ENCODE measurements at regions of chr1 and their contacts with region 1.

Region 1: GRCh38 chr1:25520446-25521061 is 22.9 kb upstream of the LDLRAP1 start:
- DNase-seq: peak; percentile 70
- H3K4me3 ChIP-seq: no peak overlapping the region
- H3K27ac ChIP-seq: no peak overlapping the region
- H3K4me1 ChIP-seq: peaks cover 0 to 7% of the 10 kb centered on the region in 2 experiments; a peak in 1 of 4 replicates
- H3K27me3 ChIP-seq: no peaks in the 10 kb centered on the region; the same call in 1 of the 2 replicates
- CTCF ChIP-seq: peak; percentile 91
- EP300 ChIP-seq: no peak
- RAD21 ChIP-seq: peak; percentile 77

Region 2: GRCh38 chr1:25427696-25428095 is 92.9 kb before region 1 on chr1:
- CTCF ChIA-PET with region 1: interaction called, 10 read pairs
- POLR2A ChIA-PET with region 1: no interaction called
- DNase-seq: no peak
- H3K4me3 ChIP-seq: no peak overlapping the region
- H3K27ac ChIP-seq: no peak overlapping the region
- H3K4me1 ChIP-seq: peaks cover 0 to 9% of the 10 kb centered on the region in 2 experiments; a peak in 3 of 4 replicates
- H3K27me3 ChIP-seq: no peaks in the 10 kb centered on the region
- CTCF ChIP-seq: no peak
- EP300 ChIP-seq: no peak
- RAD21 ChIP-seq: no peak

Region 3: DNA sequence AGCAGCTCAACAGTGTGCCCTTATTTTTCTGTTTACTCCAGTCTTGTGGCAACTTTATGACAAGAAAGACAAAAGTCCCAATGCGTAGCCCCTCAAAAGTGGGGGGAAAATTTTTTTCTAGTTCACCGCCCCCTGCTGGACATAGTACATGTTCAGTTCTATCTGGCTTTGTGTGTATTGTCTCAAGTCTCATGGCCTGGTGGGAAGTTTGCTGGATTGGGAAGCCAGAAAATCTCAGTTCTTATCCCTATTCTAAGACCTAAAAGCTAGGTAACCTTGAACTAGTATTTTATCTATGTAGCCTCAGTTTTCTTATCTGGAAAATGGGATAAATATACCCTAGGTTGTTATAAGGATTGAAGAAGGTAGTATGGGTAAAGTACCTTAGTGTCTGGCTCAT is 32.9 kb before region 1 on chr1:
- CTCF ChIA-PET with region 1: interaction called, 27 read pairs
- POLR2A ChIA-PET with region 1: no interaction called
- DNase-seq: peak; percentile 37
- H3K4me3 ChIP-seq: no peak overlapping the region; a peak in 1 of 4 replicates
- H3K27ac ChIP-seq: no peak overlapping the region
- H3K4me1 ChIP-seq: no peaks in the 10 kb centered on the region; a peak in 2 of 4 replicates
- H3K27me3 ChIP-seq: no peaks in the 10 kb centered on the region
- CTCF ChIP-seq: peak; percentile 69
- EP300 ChIP-seq: no peak
- RAD21 ChIP-seq: peak; percentile 15; the same call in 1 of the 2 replicates

Region 4: DNA sequence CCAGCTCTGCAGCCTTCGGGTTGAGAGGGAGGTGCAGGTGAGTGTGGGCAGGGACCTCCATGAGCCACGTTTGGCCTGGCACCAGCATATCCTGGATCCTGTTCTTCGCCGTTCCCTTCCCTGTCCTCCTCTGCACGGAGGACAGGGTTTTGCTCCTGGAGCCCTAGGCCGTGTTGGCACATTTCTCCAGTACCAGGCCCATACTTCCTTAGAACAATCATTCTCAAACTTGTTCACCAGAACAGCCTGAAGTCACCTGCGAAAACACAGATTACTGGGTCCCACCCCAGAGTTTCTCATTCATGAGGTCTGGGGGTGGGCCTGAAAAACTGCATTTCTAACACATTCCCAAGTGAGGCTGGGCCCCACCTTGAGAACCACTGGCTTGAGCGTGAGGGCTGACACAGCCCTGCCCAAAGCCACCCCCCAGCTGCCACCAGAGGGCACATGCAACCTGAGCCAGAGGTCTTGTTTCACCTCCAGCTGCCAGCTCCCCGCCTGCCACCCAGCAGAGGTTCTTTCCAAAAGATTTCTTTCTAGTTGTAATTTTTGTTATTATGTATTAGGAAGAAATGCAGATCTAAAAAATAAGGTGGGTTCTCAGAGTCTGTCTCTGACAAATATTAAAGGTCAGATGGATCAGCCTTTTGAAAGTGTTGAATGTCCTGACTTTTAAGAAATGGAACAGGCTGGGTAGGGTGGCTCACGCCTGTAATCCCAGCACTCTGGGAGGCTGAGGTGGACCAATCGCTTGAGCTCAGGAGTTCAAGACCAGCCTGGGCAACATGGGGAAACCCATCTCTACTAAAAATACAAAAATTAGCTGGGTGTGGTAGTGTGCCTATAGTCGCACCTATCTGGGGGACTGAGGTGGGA is 16.8 kb before region 1 on chr1:
- CTCF ChIA-PET with region 1: interaction called, 46 read pairs
- POLR2A ChIA-PET with region 1: interaction called, 3 read pairs
- DNase-seq: peak; percentile 63
- H3K4me3 ChIP-seq: no peak overlapping the region
- H3K27ac ChIP-seq: peak overlapping the region; percentile 40 to 55
- H3K4me1 ChIP-seq: peaks cover 15 to 22% of the 10 kb centered on the region in 2 experiments; a peak in 3 of 4 replicates
- H3K27me3 ChIP-seq: no peaks in the 10 kb centered on the region
- CTCF ChIP-seq: peak; percentile 48
- EP300 ChIP-seq: no peak
- RAD21 ChIP-seq: peak; percentile 54

Region 5: GRCh38 chr1:25562101-25562927 is 41.8 kb after region 1 on chr1:
- CTCF ChIA-PET with region 1: no interaction called
- POLR2A ChIA-PET with region 1: no interaction called
- DNase-seq: no peak
- H3K4me3 ChIP-seq: no peak overlapping the region
- H3K27ac ChIP-seq: no peak overlapping the region
- H3K4me1 ChIP-seq: peaks cover 0 to 15% of the 10 kb centered on the region in 2 experiments; a peak in 1 of 4 replicates
- H3K27me3 ChIP-seq: no peaks in the 10 kb centered on the region
- CTCF ChIP-seq: no peak
- EP300 ChIP-seq: no peak
- RAD21 ChIP-seq: no peak

Region 6: DNA sequence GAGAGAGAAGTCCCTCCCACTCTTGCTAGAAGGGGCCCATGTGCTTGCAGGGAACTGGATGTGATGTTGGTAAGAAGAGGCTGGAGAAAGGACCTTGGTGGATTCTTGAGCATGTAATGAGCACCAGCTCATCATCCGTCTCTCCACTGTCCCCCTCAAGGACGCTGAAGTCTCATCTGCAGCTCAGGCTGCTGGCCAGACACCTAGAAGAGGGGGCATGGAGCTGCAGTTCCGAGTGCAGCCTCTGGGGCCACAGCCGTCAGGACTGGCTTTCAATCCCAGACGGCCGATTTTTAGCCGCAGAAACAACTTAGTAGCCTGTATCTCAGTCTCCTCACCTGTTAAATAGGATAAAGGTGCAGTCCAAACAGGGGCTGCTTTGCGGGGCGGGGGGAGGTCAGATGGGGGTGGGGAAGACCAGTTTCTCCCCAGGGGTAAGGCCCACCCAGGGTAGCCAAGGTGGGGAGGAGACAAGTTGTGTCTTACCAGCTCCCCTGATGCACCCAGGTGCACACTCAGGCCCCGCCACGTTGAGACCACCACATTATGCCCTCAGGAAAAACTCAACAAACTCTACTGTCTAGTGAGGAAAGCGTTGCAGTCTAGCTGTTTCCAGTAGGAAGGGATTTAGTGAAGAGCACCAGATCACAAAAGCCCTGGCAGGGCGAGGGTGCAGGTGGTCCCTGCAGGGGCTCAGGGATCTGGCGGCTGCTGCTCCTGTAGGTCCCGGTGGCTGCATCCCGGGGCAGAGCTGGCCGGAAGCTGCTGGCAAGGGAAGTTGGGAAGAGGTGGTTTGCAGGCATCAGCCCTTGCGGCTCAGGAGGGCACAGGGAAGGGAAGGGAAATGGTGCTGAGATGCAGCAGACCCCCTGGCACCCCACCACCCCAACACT is 52.4 kb after region 1 on chr1:
- CTCF ChIA-PET with region 1: interaction called, 12 read pairs
- POLR2A ChIA-PET with region 1: no interaction called
- DNase-seq: peak; percentile 85
- H3K4me3 ChIP-seq: no peak overlapping the region
- H3K27ac ChIP-seq: no peak overlapping the region
- H3K4me1 ChIP-seq: peaks cover 9 to 11% of the 10 kb centered on the region in 2 experiments; a peak in 3 of 4 replicates
- H3K27me3 ChIP-seq: no peaks in the 10 kb centered on the region
- CTCF ChIP-seq: peak; percentile 61
- EP300 ChIP-seq: no peak
- RAD21 ChIP-seq: peak; percentile 38

Region 7: DNA sequence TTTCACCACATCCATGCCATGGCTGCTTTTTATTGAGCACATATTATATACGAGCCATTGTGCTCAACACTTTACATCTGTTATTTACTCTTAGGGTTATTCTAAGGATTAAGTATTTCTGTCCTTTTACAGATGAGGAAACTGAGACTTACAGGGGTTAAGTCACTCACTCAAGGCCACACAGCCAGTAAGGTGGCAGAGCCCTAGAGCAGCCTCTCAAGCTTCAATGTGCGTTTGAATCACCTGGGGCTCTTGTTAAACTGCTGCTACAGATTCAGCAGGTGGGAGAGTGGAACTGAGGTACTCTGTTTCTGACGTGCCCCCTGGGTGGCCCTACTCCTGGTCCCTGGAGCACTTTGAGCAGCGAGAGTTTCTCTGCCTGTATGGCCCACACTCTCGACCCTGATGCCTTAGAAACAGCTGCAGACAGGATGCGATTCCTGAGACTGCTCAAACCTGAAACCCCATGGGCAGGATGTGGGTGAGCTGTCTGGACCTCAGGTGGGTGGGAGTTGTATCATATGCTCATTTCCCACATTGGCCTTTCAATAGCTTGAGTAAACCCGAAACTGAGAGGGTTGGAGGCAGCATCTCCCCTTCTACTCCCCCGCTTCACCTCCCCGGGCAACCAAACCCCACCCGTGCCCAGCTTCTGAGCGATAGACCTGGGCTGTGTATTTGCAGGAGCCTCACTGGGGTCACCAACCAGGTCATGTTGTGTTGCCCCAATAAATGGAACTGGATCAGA is 155.3 kb after region 1 on chr1:
- CTCF ChIA-PET with region 1: no interaction called
- POLR2A ChIA-PET with region 1: no interaction called
- DNase-seq: no peak
- H3K4me3 ChIP-seq: no peak overlapping the region
- H3K27ac ChIP-seq: no peak overlapping the region
- H3K4me1 ChIP-seq: no peaks in the 10 kb centered on the region
- H3K27me3 ChIP-seq: peaks cover 21% of the 10 kb centered on the region; the same call in 1 of the 2 replicates
- CTCF ChIP-seq: no peak
- EP300 ChIP-seq: no peak
- RAD21 ChIP-seq: no peak

Region 8: GRCh38 chr1:25810341-25811299 is 290.1 kb after region 1 on chr1:
- CTCF ChIA-PET with region 1: interaction called, 12 read pairs
- POLR2A ChIA-PET with region 1: no interaction called
- DNase-seq: peak; percentile 90
- H3K4me3 ChIP-seq: no peak overlapping the region; a peak in 1 of 4 replicates
- H3K27ac ChIP-seq: peak overlapping the region in 1 of 2 experiments; percentile 24; a peak in 1 of 4 replicates
- H3K4me1 ChIP-seq: peaks cover 0 to 16% of the 10 kb centered on the region in 2 experiments; a peak in 1 of 4 replicates
- H3K27me3 ChIP-seq: no peaks in the 10 kb centered on the region
- CTCF ChIP-seq: peak; percentile 90
- EP300 ChIP-seq: no peak
- RAD21 ChIP-seq: peak; percentile 91

Measured in SK-N-SH (cell line).